MCF 10A (cell line): ENCODE measurements at regions of chr10 and their contacts with region 1.

Region 1: DNA sequence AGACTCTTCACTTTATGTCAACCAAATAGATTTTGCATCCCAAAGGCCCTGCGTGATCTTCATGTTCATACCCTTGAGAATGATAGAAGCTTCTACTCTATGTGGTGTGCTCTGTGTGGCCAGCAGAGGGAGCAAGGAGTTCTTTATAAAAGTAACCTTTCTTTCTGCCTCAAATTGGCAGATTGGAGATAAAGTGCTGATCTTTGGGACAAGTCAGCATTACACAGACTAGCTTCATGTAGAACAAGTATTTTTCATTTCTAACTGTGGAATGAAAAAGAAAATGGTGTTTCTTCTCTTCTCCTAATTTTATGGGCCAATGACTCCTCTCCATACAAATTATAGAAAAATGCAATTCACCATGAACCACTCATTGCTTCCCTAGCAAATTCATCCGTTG is 1214.1 kb downstream of the SORCS1 start:
- DNase-seq: peak; percentile 66
- H3K4me3 Mint-ChIP-seq: no peak overlapping the region
- H3K27ac Mint-ChIP-seq: no peak overlapping the region
- H3K4me1 Mint-ChIP-seq: no peaks in the 10 kb centered on the region
- H3K27me3 Mint-ChIP-seq: no peaks in the 10 kb centered on the region
- CTCF ChIP-seq: peak; percentile 77

Region 2: DNA sequence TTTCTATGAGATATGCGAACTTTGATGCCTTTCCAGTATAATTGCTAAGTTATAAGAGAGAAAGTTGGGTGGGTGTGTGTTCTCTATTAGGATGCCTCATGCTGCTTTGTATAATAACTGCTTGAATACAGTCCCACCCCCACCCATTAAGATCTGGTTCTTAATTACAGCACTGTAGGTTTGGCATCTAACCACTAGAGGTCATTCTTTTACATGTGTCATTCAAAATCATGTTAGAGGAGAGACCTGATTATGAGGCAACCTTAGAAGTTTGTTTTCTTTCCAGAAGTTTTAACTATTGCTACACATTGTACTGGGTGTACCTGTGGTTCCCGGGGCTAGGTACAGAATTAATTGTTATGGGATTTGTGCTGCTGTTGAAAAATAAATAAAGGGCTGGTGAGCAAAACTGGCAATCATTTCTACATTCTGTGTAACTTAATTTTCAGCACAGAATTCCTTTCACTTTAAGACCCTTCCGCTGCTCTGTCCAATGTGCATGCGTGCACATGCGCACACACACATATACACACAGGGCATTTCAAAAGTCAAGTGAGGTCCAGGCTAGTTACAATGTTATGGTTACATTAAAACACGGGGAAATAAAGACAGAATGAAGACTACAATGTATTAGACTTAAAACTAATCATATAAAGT is 153.0 kb before region 1 on chr10:
- CTCF ChIA-PET with region 1: interaction called, 8 read pairs
- POLR2A ChIA-PET with region 1: no interaction called
- intact Hi-C with region 1: loop called (anchors 1 kb)
- DNase-seq: peak; percentile 78
- H3K4me3 Mint-ChIP-seq: no peak overlapping the region
- H3K27ac Mint-ChIP-seq: no peak overlapping the region
- H3K4me1 Mint-ChIP-seq: peaks cover 14% of the 10 kb centered on the region
- H3K27me3 Mint-ChIP-seq: no peaks in the 10 kb centered on the region
- CTCF ChIP-seq: peak; percentile 59

Region 3: DNA sequence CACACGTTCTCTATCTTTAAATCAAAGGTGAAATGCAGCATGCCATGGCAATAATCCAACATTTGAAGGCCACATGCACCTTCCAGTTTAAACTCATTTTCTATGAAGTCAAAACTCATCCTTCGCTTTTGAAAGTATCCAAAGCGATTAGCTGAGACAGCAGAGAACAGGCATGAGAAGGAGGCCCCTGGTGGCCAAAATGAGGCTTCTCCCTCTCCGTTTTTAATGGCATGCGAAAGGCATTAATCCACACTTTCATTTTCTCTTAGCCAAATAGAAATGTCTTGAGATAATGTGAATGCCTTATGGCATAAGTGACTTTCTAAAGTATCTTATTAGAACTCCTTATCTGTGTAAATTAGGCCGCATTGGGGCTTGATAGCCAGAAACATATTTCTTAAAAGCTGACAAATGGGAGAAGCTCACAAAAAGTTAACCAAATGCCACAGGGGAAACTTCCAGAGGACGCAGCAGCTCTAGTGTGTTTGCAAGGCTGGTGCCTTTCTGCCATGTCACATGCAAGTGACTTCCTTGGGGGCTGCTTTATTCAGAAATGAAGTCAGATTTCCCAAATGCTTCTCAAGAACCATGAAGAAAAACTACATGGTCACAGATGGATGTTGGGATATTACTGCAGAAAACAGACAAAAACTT is 24.5 kb after region 1 on chr10:
- CTCF ChIA-PET with region 1: interaction called, 96 read pairs
- POLR2A ChIA-PET with region 1: interaction called, 3 read pairs
- intact Hi-C with region 1: no loop called
- DNase-seq: peak; percentile 66
- H3K4me3 Mint-ChIP-seq: peak overlapping the region; percentile 56
- H3K27ac Mint-ChIP-seq: peak overlapping the region; percentile 19
- H3K4me1 Mint-ChIP-seq: no peaks in the 10 kb centered on the region
- H3K27me3 Mint-ChIP-seq: no peaks in the 10 kb centered on the region
- CTCF ChIP-seq: peak; percentile 43

Region 4: DNA sequence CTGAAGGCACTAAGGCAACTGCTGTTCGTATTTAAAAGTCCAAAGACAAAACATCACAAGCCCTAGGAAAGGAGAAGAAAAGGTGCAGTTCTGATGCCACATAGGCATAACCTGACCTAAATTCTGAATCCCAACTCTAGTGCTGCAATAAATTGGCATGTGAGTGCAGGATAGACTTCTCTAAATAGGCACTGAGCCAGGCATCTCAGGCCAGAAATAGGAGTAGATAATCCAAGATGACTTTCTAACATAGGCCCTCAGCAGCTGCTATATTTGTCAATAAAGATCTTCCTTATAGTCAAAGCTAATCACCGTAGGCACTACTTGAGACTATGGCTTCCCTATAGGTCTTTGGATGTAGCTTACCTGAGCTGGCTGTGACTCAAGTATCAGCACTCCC is 50.3 kb after region 1 on chr10:
- CTCF ChIA-PET with region 1: no interaction called
- POLR2A ChIA-PET with region 1: no interaction called
- intact Hi-C with region 1: no loop called
- DNase-seq: no peak
- H3K4me3 Mint-ChIP-seq: no peak overlapping the region
- H3K27ac Mint-ChIP-seq: no peak overlapping the region
- H3K4me1 Mint-ChIP-seq: no peaks in the 10 kb centered on the region
- H3K27me3 Mint-ChIP-seq: no peaks in the 10 kb centered on the region
- CTCF ChIP-seq: no peak

Region 5: DNA sequence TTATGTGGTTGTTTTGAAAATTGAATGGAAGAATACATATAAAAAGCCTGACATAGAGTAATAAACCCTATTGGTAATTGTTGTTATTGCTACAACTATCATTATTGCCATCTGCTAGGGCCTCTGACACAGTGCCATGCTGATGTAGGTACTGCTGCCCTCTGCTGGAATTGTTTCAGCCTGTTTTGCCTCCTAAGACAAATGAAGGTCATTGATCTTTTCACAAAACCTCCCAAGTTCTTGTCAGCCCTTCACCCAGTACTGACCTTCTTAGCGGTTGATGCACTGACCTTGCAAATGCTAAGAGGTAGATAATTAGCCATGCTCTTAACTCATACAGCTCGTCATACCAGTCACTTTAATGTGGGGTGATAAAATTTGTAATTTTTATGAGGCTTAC is 238.9 kb after region 1 on chr10:
- CTCF ChIA-PET with region 1: interaction called, 32 read pairs
- POLR2A ChIA-PET with region 1: no interaction called
- intact Hi-C with region 1: no loop called
- DNase-seq: peak; percentile 64
- H3K4me3 Mint-ChIP-seq: no peak overlapping the region
- H3K27ac Mint-ChIP-seq: no peak overlapping the region
- H3K4me1 Mint-ChIP-seq: peaks cover 13% of the 10 kb centered on the region
- H3K27me3 Mint-ChIP-seq: no peaks in the 10 kb centered on the region
- CTCF ChIP-seq: peak; percentile 33

Region 6: GRCh38 chr10:106571192-106571946 is 621.0 kb after region 1 on chr10:
- CTCF ChIA-PET with region 1: interaction called, 5 read pairs
- POLR2A ChIA-PET with region 1: no interaction called
- intact Hi-C with region 1: loop called (anchors 2 kb)
- DNase-seq: peak; percentile 81
- H3K4me3 Mint-ChIP-seq: no peak overlapping the region
- H3K27ac Mint-ChIP-seq: peak overlapping the region; percentile 12
- H3K4me1 Mint-ChIP-seq: peaks cover 20% of the 10 kb centered on the region
- H3K27me3 Mint-ChIP-seq: no peaks in the 10 kb centered on the region
- CTCF ChIP-seq: peak; percentile 58